ENCODE measurements at regions of chr6 and their contacts with region 1.

Region 1: GRCh38 chr6:129672881-129673643 is 36.9 kb downstream of the ARHGAP18 start:
- DNase-seq: peak; percentile 88
- H3K4me3 ChIP-seq: peak overlapping the region in 1 of 3 experiments; percentile 58
- H3K27ac ChIP-seq: peak overlapping the region; percentile 93
- H3K4me1 ChIP-seq: peaks cover 72% of the 10 kb centered on the region
- H3K27me3 ChIP-seq: no peaks in the 10 kb centered on the region
- CTCF ChIP-seq: no peak
- POLR2A ChIP-seq: no peak

Region 2: DNA sequence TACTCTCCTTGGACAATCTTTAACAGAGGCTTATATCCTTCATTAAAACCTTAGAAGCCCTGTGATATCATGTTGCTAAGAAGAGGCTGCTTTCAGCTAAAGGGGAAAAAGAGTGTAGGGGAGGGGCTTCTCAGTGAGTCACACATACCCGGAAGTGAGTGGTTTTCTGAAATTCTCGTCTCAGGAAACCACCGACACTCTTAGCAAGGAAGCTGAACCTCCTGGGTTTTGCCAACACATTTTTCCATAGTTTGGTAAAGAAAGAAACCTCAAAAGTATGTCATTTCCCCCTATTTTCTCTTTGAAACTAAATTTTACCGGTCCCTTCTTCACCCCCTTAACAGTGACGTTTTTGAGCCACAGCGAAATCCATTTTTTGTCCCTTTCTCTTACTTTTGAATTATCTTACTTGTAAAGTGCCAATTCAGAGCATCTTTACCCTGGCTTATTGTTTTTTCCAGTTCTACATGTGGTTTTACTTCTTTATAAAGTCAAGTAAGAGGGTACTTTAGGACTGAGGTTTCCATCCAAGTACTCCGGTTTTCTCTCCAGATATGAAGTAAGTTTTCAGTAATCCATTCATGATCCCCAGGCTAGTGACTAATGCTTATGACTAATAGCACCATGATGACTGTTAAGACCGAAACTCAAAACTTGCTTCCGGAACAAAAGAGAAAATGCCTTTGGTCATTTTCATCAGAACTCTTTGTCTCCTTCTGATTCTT is 182.4 kb before region 1 on chr6:
- CTCF ChIA-PET with region 1: no interaction called
- POLR2A ChIA-PET with region 1: no interaction called
- dilution Hi-C with region 1: no loop called
- intact Hi-C with region 1: loop called (anchors 5 kb)
- DNase-seq: peak; percentile 95
- H3K4me3 ChIP-seq: peak overlapping the region; percentile 11 to 83 (median 41)
- H3K27ac ChIP-seq: peak overlapping the region; percentile 99
- H3K4me1 ChIP-seq: peaks cover 51% of the 10 kb centered on the region
- H3K27me3 ChIP-seq: no peaks in the 10 kb centered on the region
- CTCF ChIP-seq: no peak
- POLR2A ChIP-seq: peak; percentile 81

Region 3: GRCh38 chr6:129646642-129647041 is 26.4 kb before region 1 on chr6:
- CTCF ChIA-PET with region 1: interaction called, 16 read pairs
- POLR2A ChIA-PET with region 1: interaction called, 6 read pairs
- dilution Hi-C with region 1: no loop called
- intact Hi-C with region 1: loop called (anchors 1 kb)
- DNase-seq: no peak
- H3K4me3 ChIP-seq: no peak overlapping the region
- H3K27ac ChIP-seq: peak overlapping the region; percentile 98
- H3K4me1 ChIP-seq: peaks cover 81% of the 10 kb centered on the region
- H3K27me3 ChIP-seq: no peaks in the 10 kb centered on the region
- CTCF ChIP-seq: no peak
- POLR2A ChIP-seq: no peak

Region 4: GRCh38 chr6:129683601-129684322 is 10.7 kb after region 1 on chr6:
- CTCF ChIA-PET with region 1: interaction called, 16 read pairs
- POLR2A ChIA-PET with region 1: interaction called, 16 read pairs
- dilution Hi-C with region 1: no loop called
- intact Hi-C with region 1: loop called (anchors 1 kb)
- DNase-seq: peak; percentile 97
- H3K4me3 ChIP-seq: peak overlapping the region in 1 of 3 experiments; percentile 6
- H3K27ac ChIP-seq: peak overlapping the region; percentile 98
- H3K4me1 ChIP-seq: peaks cover 77% of the 10 kb centered on the region
- H3K27me3 ChIP-seq: no peaks in the 10 kb centered on the region
- CTCF ChIP-seq: no peak
- POLR2A ChIP-seq: peak; percentile 82

Region 5: DNA sequence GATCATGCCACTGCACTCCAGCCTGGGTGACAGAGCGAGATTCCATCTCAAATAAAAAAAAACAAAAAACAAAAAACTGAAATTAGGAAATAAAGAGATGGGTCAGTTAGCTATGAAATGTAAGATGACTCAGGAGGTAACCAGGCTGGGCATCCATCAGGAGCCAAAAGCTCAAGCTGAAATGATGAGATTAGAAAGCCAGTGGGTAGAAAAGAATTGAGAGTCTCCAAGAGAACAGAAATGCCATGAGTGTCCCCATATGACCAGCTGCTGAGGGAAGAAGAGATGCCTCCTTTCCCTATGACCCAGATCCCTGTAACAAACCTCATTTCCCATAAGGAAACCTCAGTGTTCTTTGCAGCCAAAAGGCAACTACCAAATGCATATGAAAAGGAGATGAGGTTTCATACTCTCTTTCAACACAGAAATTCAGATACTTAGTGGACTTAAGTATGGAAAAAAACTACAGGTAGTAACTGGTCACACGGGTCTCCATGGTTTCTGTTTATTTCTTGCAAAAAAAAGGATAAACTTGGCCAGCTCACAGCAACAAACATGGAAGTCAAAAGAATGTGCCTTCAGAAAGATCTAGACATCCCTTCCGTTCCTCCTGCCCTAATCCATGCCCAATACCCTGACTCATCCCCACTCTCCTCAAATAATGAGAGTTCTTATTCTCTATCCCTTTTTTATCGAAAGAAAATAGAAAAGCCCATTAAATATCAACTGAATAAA is 28.8 kb after region 1 on chr6:
- CTCF ChIA-PET with region 1: interaction called, 6 read pairs
- POLR2A ChIA-PET with region 1: interaction called, 4 read pairs
- dilution Hi-C with region 1: no loop called
- intact Hi-C with region 1: loop called (anchors 1 kb)
- DNase-seq: no peak
- H3K4me3 ChIP-seq: no peak overlapping the region
- H3K27ac ChIP-seq: peak overlapping the region; percentile 66
- H3K4me1 ChIP-seq: peaks cover 66% of the 10 kb centered on the region
- H3K27me3 ChIP-seq: no peaks in the 10 kb centered on the region
- CTCF ChIP-seq: no peak
- POLR2A ChIP-seq: peak; percentile 27

Region 6: GRCh38 chr6:129709769-129710449 is 36.8 kb after region 1 on chr6 and contains the start of gene ARHGAP18:
- CTCF ChIA-PET with region 1: interaction called, 12 read pairs
- POLR2A ChIA-PET with region 1: interaction called, 8 read pairs
- dilution Hi-C with region 1: no loop called
- intact Hi-C with region 1: loop called (anchors 1 kb)
- DNase-seq: peak; percentile 97
- H3K4me3 ChIP-seq: peak within 1 kb of the TSS; percentile 60 to 90 (median 90)
- H3K27ac ChIP-seq: peak within 1 kb of the TSS; percentile 63
- H3K4me1 ChIP-seq: peaks cover 44% of the 10 kb centered on the region
- H3K27me3 ChIP-seq: no peaks in the 10 kb centered on the region
- CTCF ChIP-seq: no peak
- POLR2A ChIP-seq: peak; percentile 81
- total RNA-seq, gene ARHGAP18: 86.1 and 111 TPM in 2 replicates

Region 7: GRCh38 chr6:129730477-129731165 is 57.6 kb after region 1 on chr6:
- CTCF ChIA-PET with region 1: interaction called, 10 read pairs
- POLR2A ChIA-PET with region 1: no interaction called
- dilution Hi-C with region 1: no loop called
- intact Hi-C with region 1: loop called (anchors 1 kb)
- DNase-seq: peak; percentile 63
- H3K4me3 ChIP-seq: no peak overlapping the region
- H3K27ac ChIP-seq: no peak overlapping the region
- H3K4me1 ChIP-seq: peaks cover 7% of the 10 kb centered on the region
- H3K27me3 ChIP-seq: no peaks in the 10 kb centered on the region
- CTCF ChIP-seq: peak; percentile 29 to 40
- POLR2A ChIP-seq: no peak